Left cardiac atrium (tissue), 4 donors: ENCODE measurements at regions of chr17 and their contacts with region 1.

Region 1: GRCh38 chr17:73657473-73658116 is 13.3 kb upstream of the SDK2 start:
- DNase-seq: peak; percentile 68
- ATAC-seq: peak in 1 of 2 donors; percentile 72

Region 2: GRCh38 chr17:73710095-73710592 is 52.5 kb after region 1 on chr17:
- intact Hi-C with region 1: loop called in 1 of 2 experiments (anchors 10 kb)
- DNase-seq: peak; percentile 67
- ATAC-seq: peak; percentile 93 to 96

Region 3: DNA sequence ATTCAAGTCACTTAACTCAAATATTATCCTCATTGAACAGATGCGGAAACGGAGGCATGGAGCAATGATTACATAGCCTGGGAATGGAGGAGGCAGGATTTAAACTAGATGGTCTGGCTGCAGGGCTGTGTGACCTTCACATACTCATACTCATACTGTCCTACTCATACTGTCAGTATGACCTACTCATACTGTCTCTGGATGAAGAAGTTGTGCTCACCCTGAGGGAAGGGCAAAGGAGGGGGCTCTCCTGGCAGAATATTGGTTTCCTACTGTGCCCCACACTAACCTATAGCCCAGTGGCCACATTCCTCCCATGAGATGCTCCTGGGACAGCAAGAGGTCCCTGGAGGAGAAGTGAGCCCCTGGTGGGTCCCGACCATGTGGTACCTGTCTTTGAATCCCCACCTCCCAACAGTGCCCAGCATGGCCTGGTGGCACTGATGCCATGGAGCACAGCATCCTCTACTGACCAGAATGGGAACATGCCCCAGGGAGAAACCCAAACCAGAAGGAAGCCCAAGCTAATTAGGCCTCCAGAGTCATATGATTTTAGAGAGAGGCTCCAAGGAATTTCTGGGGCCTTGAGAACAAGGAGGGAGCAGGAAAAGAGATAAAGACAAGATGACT is 184.0 kb after region 1 on chr17:
- intact Hi-C with region 1: loop called (anchors 10 kb)
- DNase-seq: no peak
- ATAC-seq: peak in 1 of 2 donors; percentile 40

Region 4: DNA sequence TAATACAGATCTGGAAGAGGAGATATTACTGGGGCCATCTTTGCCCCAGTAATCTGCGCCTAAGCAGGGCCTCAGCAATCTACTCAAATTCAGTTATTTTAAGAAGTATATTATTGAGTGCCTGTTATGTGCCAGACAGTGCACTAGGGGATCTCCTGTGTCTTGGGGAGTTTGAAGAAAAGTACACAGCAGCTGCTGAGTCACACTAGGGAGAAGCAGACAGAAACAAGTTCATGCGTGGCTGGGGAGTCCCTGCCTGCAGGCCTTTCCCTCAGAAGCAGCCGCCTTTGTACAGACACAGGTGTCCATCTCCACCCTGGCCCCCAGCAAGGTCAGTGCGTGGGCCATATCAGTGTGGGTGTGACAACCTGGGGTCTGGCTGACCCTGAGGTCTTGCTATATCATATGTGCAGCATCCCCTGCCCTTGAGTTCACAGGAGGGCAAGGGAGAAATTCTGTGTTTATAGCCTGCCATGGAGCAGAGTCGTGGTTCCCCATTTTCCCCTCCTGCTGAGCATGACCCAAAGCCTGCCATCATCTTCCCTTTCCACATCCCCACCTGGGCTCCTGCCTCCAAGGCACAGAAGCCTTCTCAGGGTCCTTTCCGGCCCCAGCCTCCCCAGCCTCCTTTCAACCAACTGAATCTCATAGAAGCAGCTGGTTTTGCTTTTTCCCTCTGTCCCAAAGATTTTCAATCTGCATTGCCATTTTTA is 216.6 kb after region 1 on chr17:
- intact Hi-C with region 1: no loop called
- DNase-seq: no peak
- ATAC-seq: no peak

Region 5: DNA sequence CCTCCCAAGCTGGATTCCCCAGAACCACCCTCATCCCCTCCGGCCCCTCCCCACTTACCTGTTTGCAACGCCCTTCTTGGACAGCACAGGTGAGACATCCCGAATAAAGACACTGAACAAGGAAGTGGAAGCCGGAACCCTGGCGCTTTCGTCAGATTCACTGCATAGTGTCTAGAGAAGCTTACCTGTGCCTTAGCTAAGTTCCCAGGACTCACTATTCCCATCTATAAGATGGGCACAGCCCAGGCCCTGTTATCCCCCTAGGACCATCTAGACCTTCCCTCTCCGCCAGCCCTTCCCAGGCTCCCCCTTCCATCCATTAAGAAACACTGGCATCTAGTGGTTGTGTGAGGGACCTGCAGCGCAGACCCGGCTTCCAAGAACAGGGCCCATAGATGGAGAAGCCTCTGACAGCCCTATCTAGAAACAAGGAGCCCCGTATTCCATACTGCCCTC is 519.0 kb after region 1 on chr17:
- intact Hi-C with region 1: loop called in 1 of 2 experiments (anchors 5 kb)
- DNase-seq: peak; percentile 55
- ATAC-seq: peak; percentile 78 to 90